CD4-positive, alpha-beta T cell (primary cell): ENCODE measurements at regions of chr22 and their contacts with region 1.

Region 1: DNA sequence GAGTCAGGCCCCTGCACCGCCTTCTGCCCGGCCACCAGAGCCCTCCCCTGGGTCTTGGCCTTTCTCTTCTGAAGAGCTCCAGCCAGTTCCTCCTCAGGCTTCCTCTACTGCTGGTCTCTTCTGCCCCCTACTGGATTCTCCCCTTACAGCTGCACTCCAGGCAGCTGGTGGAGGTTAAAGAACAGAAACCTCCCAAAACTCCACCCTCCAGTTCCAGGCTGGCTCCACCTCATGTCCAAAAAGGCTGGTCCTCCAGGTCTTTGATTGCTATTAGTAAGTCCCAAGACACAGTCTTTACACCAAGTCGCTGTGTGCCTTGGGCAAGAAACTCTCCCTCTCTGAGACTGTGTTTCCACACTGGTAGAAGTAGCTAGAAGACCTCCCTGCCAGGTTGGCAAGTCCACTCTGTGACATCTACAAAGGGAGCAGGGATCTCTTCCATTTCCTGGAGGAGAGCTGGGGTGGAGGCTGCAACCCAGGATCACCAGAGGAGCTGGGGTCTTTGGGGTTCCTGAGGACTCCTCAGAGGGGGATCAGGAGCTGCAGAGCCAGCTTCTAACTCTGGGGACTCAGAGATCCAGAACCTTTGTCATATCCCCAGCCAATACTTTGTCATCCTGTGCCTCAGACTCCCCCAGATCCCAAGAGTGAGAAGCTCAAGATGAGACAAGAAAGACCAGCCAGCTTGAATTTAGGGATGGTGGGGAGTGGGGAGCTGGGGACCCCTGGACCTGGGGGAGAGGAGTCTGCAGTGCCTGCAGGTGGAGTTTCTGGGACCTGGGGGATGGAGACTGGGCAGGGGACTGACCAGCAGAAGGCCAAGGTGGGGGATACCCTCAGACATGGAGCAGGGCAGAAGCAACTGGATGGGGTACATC is 3.4 kb upstream of the IGLL5 start:
- DNase-seq: peak; percentile 43 to 87 (median 57)
- ATAC-seq: peak; percentile 90
- H3K4me3 ChIP-seq: no peak overlapping the region
- H3K4me3 Mint-ChIP-seq: no peak overlapping the region
- H3K27ac ChIP-seq: no peak overlapping the region
- H3K27ac Mint-ChIP-seq: no peak overlapping the region
- H3K4me1 ChIP-seq: peaks cover 5% of the 10 kb centered on the region
- H3K4me1 Mint-ChIP-seq: no peaks in the 10 kb centered on the region
- H3K27me3 ChIP-seq: peaks cover 0 to 4% of the 10 kb centered on the region in 2 experiments
- H3K27me3 Mint-ChIP-seq: no peaks in the 10 kb centered on the region
- CTCF ChIP-seq: peak; percentile 83

Region 2: GRCh38 chr22:22593964-22594656 is 290.1 kb before region 1 on chr22:
- CTCF ChIA-PET with region 1: no interaction called
- POLR2A ChIA-PET with region 1: no interaction called
- intact Hi-C with region 1: loop called (anchors 5 to 10 kb)
- DNase-seq: peak; percentile 7 to 76 (median 42)
- ATAC-seq: peak; percentile 60
- H3K4me3 ChIP-seq: no peak overlapping the region
- H3K4me3 Mint-ChIP-seq: no peak overlapping the region
- H3K27ac ChIP-seq: no peak overlapping the region
- H3K27ac Mint-ChIP-seq: no peak overlapping the region
- H3K4me1 ChIP-seq: peaks cover 3% of the 10 kb centered on the region
- H3K4me1 Mint-ChIP-seq: no peaks in the 10 kb centered on the region
- H3K27me3 ChIP-seq: peaks cover 0 to 3% of the 10 kb centered on the region in 2 experiments
- H3K27me3 Mint-ChIP-seq: peaks cover 6% of the 10 kb centered on the region
- CTCF ChIP-seq: peak; percentile 76

Region 3: GRCh38 chr22:22710719-22711531 is 173.3 kb before region 1 on chr22:
- CTCF ChIA-PET with region 1: interaction called, 9 read pairs
- POLR2A ChIA-PET with region 1: no interaction called
- intact Hi-C with region 1: loop called (anchors 1 kb)
- DNase-seq: peak; percentile 56 to 87 (median 76)
- ATAC-seq: peak; percentile 61
- H3K4me3 ChIP-seq: no peak overlapping the region
- H3K4me3 Mint-ChIP-seq: no peak overlapping the region
- H3K27ac ChIP-seq: no peak overlapping the region
- H3K27ac Mint-ChIP-seq: no peak overlapping the region
- H3K4me1 ChIP-seq: no peaks in the 10 kb centered on the region
- H3K4me1 Mint-ChIP-seq: no peaks in the 10 kb centered on the region
- H3K27me3 ChIP-seq: no peaks in the 10 kb centered on the region
- H3K27me3 Mint-ChIP-seq: no peaks in the 10 kb centered on the region
- CTCF ChIP-seq: peak; percentile 96

Region 4: DNA sequence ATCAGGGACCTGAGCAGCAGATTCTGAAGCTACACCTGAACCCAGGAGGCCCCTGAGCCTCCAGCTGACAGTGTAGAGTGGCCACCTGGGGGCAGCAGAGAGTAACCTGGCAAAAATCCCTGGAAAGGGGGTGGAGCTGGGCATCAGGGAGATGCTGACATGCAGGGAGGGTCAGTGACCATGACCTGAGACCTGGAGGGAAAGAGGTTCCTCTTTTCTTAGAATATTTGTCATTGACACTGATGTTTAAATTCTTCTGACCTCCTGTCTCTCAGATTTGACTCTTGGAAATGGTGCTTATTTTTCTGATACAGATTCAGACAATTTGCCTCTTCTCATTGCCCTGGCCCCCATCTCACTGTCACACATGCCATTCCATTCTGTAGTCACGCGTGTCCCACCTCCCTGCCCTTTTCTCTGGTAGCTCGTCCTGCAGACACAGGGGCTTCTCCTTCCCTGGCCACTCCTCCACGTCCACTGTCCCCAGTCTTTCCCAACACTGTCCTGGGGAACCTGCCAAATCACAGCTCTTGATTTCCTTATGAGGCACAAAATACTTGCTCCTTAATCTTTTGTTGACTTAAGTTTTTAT is 113.9 kb before region 1 on chr22:
- CTCF ChIA-PET with region 1: interaction called, 13 read pairs
- POLR2A ChIA-PET with region 1: interaction called, 5 read pairs
- intact Hi-C with region 1: no loop called
- DNase-seq: peak in 12 of 14 experiments; percentile 19 to 69 (median 36)
- ATAC-seq: peak; percentile 54
- H3K4me3 ChIP-seq: no peak overlapping the region
- H3K4me3 Mint-ChIP-seq: no peak overlapping the region
- H3K27ac ChIP-seq: no peak overlapping the region
- H3K27ac Mint-ChIP-seq: no peak overlapping the region
- H3K4me1 ChIP-seq: peaks cover 21% of the 10 kb centered on the region
- H3K4me1 Mint-ChIP-seq: no peaks in the 10 kb centered on the region
- H3K27me3 ChIP-seq: no peaks in the 10 kb centered on the region
- H3K27me3 Mint-ChIP-seq: peaks cover 12% of the 10 kb centered on the region
- CTCF ChIP-seq: peak; percentile 75

Region 5: GRCh38 chr22:22802339-22802970 is 81.8 kb before region 1 on chr22:
- CTCF ChIA-PET with region 1: interaction called, 31 read pairs
- POLR2A ChIA-PET with region 1: interaction called, 11 read pairs
- intact Hi-C with region 1: loop called in 1 of 2 experiments (anchors 1 kb)
- DNase-seq: peak in 10 of 14 experiments; percentile 38 to 81 (median 57)
- ATAC-seq: peak; percentile 72
- H3K4me3 ChIP-seq: no peak overlapping the region
- H3K4me3 Mint-ChIP-seq: no peak overlapping the region
- H3K27ac ChIP-seq: no peak overlapping the region
- H3K27ac Mint-ChIP-seq: no peak overlapping the region
- H3K4me1 ChIP-seq: peaks cover 25% of the 10 kb centered on the region
- H3K4me1 Mint-ChIP-seq: peaks cover 55% of the 10 kb centered on the region
- H3K27me3 ChIP-seq: peaks cover 0 to 2% of the 10 kb centered on the region in 2 experiments
- H3K27me3 Mint-ChIP-seq: no peaks in the 10 kb centered on the region
- CTCF ChIP-seq: peak; percentile 83

Region 6: DNA sequence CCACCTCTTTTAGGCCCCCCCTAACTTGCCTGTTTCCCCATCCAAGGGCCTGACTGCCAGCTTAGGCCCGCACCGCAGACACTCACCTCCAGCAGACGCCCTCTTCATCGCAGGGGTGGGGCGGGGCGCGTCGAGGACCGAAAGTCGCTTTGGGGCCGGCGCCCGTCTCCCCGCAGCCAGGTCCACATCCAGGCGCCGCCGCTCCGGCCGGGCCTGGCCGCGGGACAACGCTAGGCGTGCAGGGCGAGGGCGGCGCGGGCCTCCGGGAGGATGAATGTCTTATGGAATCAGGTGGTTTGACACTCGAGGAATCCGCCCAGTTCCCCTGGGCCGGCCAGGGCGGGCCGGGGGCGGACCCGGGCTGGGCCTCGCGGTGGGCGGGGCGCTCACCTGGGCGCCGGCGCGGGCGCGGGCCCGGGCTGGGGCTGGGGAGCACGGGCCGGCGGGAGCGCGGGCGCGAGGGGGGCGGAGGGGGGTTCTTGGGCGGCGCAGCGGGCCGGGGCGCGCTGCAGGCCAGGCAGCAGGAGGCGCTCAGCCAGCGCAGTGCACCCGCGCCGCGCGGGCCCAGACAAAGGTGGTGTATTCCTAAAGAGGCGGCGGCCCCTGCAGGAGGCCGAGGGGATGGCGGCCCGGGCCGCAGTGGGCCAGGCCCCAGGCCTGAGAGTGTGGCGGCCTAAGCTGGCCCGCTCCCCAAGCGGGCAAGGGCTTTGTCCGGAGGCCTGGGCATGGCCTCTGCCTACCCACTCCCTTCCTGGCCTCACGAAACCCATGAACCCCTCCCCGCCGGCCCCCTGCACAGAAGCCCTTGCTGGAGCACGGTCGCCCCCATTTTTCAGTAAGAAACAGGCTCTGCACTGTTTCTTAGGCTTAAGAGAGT is 518.3 kb after region 1 on chr22:
- CTCF ChIA-PET with region 1: no interaction called
- POLR2A ChIA-PET with region 1: no interaction called
- intact Hi-C with region 1: no loop called
- DNase-seq: peak in 13 of 14 experiments; percentile 17 to 78 (median 40)
- ATAC-seq: peak; percentile 86
- H3K4me3 ChIP-seq: no peak overlapping the region
- H3K4me3 Mint-ChIP-seq: no peak overlapping the region
- H3K27ac ChIP-seq: no peak overlapping the region
- H3K27ac Mint-ChIP-seq: no peak overlapping the region
- H3K4me1 ChIP-seq: peaks cover 5% of the 10 kb centered on the region
- H3K4me1 Mint-ChIP-seq: no peaks in the 10 kb centered on the region
- H3K27me3 ChIP-seq: peaks cover 0 to 2% of the 10 kb centered on the region in 2 experiments
- H3K27me3 Mint-ChIP-seq: no peaks in the 10 kb centered on the region
- CTCF ChIP-seq: peak; percentile 19